HAP-1 (cell line): ENCODE measurements at regions of chr5 and their contacts with region 1.

Region 1: GRCh38 chr5:6772886-6773285 is 59.7 kb downstream of the TENT4A start:
- DNase-seq: no peak
- H3K4me3 ChIP-seq: no peak overlapping the region
- H3K4me1 ChIP-seq: no peaks in the 10 kb centered on the region
- H3K27me3 ChIP-seq: no peaks in the 10 kb centered on the region

Region 2: GRCh38 chr5:6704361-6704851 is 68.5 kb before region 1 on chr5:
- in situ Hi-C with region 1: no loop called
- DNase-seq: no peak
- H3K4me3 ChIP-seq: no peak overlapping the region
- H3K4me1 ChIP-seq: no peaks in the 10 kb centered on the region; the same call in 1 of the 2 replicates
- H3K27me3 ChIP-seq: no peaks in the 10 kb centered on the region

Region 3: DNA sequence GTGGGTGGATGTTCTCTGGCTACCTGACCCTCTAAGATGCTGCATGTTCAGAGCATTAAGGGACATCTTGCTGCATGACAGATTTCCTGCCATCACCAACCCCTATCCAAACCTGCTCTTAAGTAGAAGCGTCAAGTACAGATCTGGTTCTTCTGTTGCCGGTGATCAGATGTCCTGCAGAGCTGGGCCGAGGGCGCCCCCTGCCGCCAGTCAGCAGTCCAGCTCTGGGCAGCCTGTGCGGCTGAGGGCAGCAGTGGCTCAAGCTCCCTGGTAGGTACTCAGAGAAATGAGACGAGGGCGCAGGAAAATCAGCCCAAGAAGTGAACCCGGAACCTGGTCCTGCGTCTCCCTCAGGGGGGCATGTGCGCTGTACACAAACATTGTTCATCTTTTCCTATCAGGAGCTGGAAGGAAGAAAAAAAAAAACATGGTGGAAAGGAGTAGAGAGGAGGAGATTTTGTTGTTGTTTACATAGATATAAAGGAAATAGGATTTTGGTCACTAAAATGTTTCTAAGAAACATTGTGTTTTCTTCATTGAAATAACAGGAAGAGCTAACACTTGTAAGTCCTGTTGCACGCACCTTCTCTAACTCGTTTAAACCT is 982.2 kb after region 1 on chr5:
- in situ Hi-C with region 1: loop called (anchors 10 kb)
- DNase-seq: peak; percentile 36 to 74
- H3K4me3 ChIP-seq: no peak overlapping the region
- H3K4me1 ChIP-seq: no peaks in the 10 kb centered on the region
- H3K27me3 ChIP-seq: no peaks in the 10 kb centered on the region